ENCODE measurements at regions of chr10 and their contacts with region 1.

Region 1: DNA sequence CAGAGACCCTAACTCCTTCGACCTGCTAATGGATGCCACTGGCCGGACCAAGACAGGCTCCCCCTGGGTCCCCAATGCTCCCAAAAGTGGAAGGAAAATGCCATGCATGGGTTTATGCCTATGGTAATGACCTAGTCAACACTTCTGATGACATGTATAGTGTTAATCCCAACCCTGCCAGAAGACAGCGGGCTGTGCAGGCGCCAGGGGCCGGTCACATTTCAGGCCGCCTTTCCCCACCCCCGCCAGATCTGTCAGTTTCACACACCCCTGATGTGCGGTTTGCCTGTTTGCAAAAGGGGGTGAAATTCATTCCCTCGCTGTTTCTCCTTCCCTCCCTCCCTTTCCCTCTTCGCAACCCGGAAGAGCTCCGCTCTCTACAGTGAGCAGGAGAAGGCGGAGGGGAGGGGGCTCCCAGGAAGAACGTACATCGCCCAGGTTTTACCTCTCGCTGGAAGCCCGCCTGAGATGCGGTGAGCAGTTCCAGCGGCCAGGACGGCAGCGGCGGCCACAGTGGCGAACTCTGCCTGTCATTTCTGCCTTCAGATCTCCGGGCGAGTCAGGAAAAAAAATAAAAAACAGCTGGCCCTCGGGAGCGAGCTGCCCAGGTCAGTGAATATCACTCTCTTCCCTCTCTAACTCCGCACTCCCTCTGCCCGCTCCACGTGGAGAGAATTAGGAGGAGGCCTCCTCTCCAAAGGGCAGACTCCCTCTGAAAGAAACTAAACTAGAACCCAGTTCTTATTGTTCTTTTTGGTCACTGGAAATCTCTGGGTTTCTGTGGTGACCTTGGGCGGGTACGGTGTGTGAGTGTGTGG is 9.4 kb upstream of the GATA3 start:
- DNase-seq: no peak
- H3K4me3 Mint-ChIP-seq: peak overlapping the region; percentile 69
- H3K27ac Mint-ChIP-seq: peak overlapping the region; percentile 33
- H3K4me1 Mint-ChIP-seq: peaks cover 32% of the 10 kb centered on the region
- H3K27me3 Mint-ChIP-seq: peaks cover 89% of the 10 kb centered on the region
- CTCF ChIP-seq: no peak

Region 2: DNA sequence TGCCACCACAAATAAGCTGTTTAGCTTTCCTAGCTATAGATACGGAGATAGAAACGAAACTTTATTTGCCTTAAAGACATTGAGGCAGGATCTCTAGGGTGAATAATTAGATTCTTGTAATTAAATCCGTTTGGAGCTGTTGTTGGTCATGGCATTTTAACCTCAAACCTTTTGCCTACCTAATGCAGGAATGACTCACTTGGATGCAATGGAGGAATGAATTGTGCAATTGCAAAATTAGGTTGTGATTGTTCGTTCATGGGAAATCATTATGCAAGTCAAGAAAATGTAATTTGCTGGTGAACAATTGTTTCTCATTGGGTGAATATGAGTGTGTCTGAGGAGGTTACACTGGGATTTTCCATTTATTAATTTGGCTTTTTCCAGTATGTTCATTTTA is 712.9 kb after region 1 on chr10:
- CTCF ChIA-PET with region 1: no interaction called
- intact Hi-C with region 1: loop called (anchors 10 kb)
- DNase-seq: no peak
- H3K4me3 Mint-ChIP-seq: no peak overlapping the region
- H3K27ac Mint-ChIP-seq: no peak overlapping the region
- H3K4me1 Mint-ChIP-seq: no peaks in the 10 kb centered on the region
- H3K27me3 Mint-ChIP-seq: no peaks in the 10 kb centered on the region
- CTCF ChIP-seq: no peak